GM23248 (cell line): ENCODE measurements at regions of chrX and their contacts with region 1.

Region 1: DNA sequence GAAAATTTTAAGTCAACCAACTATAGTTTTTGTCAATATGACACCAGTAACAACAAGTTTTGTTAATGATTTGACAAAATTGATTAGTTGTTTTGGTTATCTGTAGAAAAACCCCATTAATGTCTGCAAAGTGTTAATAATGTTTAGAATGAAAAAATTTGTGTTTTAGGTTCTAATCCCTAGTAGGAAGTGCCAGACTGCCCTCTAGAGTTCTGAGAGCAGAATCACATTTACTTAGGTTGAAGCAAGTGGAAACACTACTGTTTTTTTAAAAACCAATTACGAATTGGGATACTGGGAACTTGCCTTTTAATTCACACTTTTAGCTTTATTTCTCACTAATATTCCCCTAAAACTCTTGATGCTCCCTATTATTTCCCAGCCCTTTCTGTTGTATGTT is 101.1 kb upstream of the CYLC1 start:
- DNase-seq: peak; percentile 33
- H3K4me3 ChIP-seq: no peak overlapping the region
- H3K27ac ChIP-seq: no peak overlapping the region
- H3K4me1 ChIP-seq: no peaks in the 10 kb centered on the region
- H3K27me3 ChIP-seq: no peaks in the 10 kb centered on the region

Region 2: DNA sequence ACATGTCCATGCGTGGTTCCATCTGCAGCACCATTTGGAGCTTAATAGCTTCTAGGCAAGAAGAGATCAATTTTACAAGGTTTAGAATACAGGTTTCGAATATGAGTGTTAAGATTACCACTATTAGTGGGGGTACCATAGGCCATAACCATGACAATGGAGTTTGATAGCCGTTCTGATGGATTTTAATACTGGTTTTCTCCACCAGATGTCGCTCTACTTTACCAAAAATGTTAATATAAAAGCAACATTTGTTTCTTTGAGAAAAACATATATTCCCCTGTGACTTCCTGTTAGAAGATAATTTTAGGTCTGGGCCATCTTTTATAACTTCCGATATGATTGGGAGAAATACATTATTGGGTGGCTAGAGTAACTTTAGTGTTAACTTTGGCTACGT is 751.5 kb before region 1 on chrX:
- in situ Hi-C with region 1: no loop called
- DNase-seq: peak; percentile 0
- H3K4me3 ChIP-seq: no peak overlapping the region
- H3K27ac ChIP-seq: no peak overlapping the region
- H3K4me1 ChIP-seq: no peaks in the 10 kb centered on the region
- H3K27me3 ChIP-seq: no peaks in the 10 kb centered on the region

Region 3: DNA sequence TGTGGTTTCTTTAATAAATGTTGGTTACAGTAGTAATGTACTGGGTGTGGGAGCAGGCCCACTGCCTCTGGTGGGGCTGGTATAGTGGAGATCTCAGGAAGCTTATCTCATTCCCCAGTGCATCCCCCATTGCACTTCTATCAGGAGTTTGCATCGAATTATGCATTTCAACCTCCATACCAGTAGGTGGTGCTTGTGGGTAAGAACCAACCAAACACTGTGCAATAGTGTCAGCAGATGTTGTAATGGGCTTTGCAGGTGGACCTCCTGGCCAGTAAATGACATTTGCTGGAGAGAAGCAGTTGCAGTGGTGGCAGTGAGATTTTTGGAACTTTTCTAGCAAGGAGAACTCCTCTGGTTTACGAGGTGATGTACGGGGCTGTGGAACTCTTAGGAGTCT is 101.1 kb before region 1 on chrX:
- in situ Hi-C with region 1: loop called (anchors 25 kb)
- DNase-seq: no peak
- H3K4me3 ChIP-seq: no peak overlapping the region
- H3K27ac ChIP-seq: no peak overlapping the region
- H3K4me1 ChIP-seq: no peaks in the 10 kb centered on the region
- H3K27me3 ChIP-seq: no peaks in the 10 kb centered on the region